Heart left ventricle (tissue), 16 donors: ENCODE measurements at regions of chr14 and their contacts with region 1.

Region 1: DNA sequence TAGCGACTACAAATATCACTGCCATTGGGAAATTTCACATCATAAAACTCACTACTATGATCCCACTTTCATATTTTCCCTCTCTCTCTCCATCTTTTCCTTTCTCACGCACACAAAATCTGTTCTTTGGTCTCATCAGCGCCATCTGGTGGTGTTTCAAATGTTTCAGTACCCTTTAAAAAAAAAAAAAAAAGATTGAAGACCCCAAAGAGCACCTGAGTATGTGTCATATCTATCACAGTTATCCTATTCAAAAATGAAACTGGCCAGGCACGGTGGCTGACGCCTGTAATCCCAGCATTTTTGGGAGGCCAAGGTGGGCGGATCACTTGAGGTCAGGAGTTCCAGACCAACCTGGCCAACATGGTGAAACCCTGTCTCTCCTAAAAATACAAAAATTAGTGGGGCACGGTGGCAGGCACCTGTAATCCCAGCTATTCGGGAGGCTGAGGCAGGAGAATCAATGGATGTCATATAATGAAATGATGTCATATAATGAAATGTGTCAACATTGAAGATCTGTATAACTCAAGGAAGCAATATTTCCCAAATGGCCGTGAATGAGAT is 72.4 kb downstream of the TTC9 start:
- DNase-seq: peak in 3 of 5 donors; percentile 37 to 41 (median 38)
- ATAC-seq: peak in 1 of 4 donors; percentile 29
- H3K4me3 ChIP-seq: peak overlapping the region in 1 of 12 donors; percentile 15
- H3K27ac ChIP-seq: peak overlapping the region in 2 of 12 donors; percentile 35 to 37
- H3K4me1 ChIP-seq: peaks cover 0 to 16% (median 7%) of the 10 kb centered on the region in 12 donors
- H3K27me3 ChIP-seq: peaks cover 0 to 9% (median 0%) of the 10 kb centered on the region in 9 donors
- CTCF ChIP-seq: peak; percentile 61 to 80 (median 70)
- POLR2A ChIP-seq: no peak

Region 2: GRCh38 chr14:70045844-70046535 is 668.1 kb before region 1 on chr14:
- intact Hi-C with region 1: loop called in 7 of 10 experiments (anchors 5 to 10 kb)
- DNase-seq: peak in 4 of 5 donors; percentile 37 to 71 (median 48)
- ATAC-seq: peak in 3 of 4 donors; percentile 80 to 89 (median 89)
- H3K4me3 ChIP-seq: no peak overlapping the region
- H3K27ac ChIP-seq: no peak overlapping the region
- H3K4me1 ChIP-seq: no peaks in the 10 kb centered on the region
- H3K27me3 ChIP-seq: peaks cover 0 to 39% (median 7%) of the 10 kb centered on the region in 9 donors
- CTCF ChIP-seq: peak; percentile 45 to 73 (median 58)
- POLR2A ChIP-seq: no peak

Region 3: GRCh38 chr14:70640938-70641547 is 73.1 kb before region 1 on chr14:
- intact Hi-C with region 1: loop called in 4 of 10 experiments (anchors 2 to 5 kb)
- DNase-seq: peak in 2 of 5 donors; percentile 53 to 62
- ATAC-seq: peak in 3 of 4 donors; percentile 67 to 92 (median 74)
- H3K4me3 ChIP-seq: peak overlapping the region; percentile 46 to 90 (median 72)
- H3K27ac ChIP-seq: no peak overlapping the region
- H3K4me1 ChIP-seq: peaks cover 0 to 19% (median 9%) of the 10 kb centered on the region in 12 donors
- H3K27me3 ChIP-seq: peaks cover 0 to 47% (median 4%) of the 10 kb centered on the region in 9 donors
- CTCF ChIP-seq: no peak
- POLR2A ChIP-seq: no peak

Region 4: DNA sequence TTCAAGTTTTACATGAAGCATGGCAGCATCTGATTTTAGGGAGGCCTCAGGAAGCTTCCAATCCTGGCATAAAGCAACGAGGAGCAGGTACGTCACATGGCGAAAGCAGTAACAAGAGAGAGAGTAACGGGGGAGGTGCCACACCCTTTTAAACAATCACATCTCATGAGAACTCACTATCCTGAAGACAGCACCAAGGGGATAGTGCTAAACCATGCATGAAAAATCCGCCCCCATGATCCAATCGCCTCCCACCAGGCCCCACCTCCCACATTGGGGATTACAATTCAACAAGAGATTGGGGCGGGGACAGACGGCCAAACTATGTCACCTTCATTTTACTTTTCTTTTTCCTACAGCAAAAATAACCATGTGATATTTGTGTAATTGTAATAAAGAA is 102.4 kb after region 1 on chr14:
- intact Hi-C with region 1: loop called in 2 of 10 experiments (anchors 5 to 10 kb)
- DNase-seq: no peak
- ATAC-seq: no peak
- H3K4me3 ChIP-seq: no peak overlapping the region
- H3K27ac ChIP-seq: no peak overlapping the region
- H3K4me1 ChIP-seq: peaks cover 0 to 13% (median 7%) of the 10 kb centered on the region in 12 donors
- H3K27me3 ChIP-seq: peaks cover 0 to 10% (median 0%) of the 10 kb centered on the region in 9 donors
- CTCF ChIP-seq: no peak
- POLR2A ChIP-seq: no peak